ENCODE measurements at regions of chr13 and their contacts with region 1.

Region 1: GRCh38 chr13:47499358-47500150 is 501.5 kb downstream of the SUCLA2 start:
- DNase-seq: no peak
- ATAC-seq: peak in 1 of 4 donors; percentile 54
- H3K4me3 ChIP-seq: no peak overlapping the region
- H3K27ac ChIP-seq: peak overlapping the region in 1 of 12 donors; percentile 49
- H3K4me1 ChIP-seq: peaks cover 0 to 20% (median 0%) of the 10 kb centered on the region in 12 donors
- H3K27me3 ChIP-seq: no peaks in the 10 kb centered on the region
- CTCF ChIP-seq: no peak
- POLR2A ChIP-seq: no peak

Region 2: GRCh38 chr13:47426126-47426849 is 73.3 kb before region 1 on chr13:
- intact Hi-C with region 1: loop called in 1 of 10 experiments (anchors 10 kb)
- DNase-seq: peak; percentile 28 to 52 (median 46)
- ATAC-seq: peak; percentile 82 to 90 (median 88)
- H3K4me3 ChIP-seq: no peak overlapping the region
- H3K27ac ChIP-seq: no peak overlapping the region
- H3K4me1 ChIP-seq: peaks cover 0 to 7% (median 0%) of the 10 kb centered on the region in 12 donors
- H3K27me3 ChIP-seq: no peaks in the 10 kb centered on the region
- CTCF ChIP-seq: no peak
- POLR2A ChIP-seq: no peak